ENCODE measurements at regions of chr12 and their contacts with region 1.

Region 1: DNA sequence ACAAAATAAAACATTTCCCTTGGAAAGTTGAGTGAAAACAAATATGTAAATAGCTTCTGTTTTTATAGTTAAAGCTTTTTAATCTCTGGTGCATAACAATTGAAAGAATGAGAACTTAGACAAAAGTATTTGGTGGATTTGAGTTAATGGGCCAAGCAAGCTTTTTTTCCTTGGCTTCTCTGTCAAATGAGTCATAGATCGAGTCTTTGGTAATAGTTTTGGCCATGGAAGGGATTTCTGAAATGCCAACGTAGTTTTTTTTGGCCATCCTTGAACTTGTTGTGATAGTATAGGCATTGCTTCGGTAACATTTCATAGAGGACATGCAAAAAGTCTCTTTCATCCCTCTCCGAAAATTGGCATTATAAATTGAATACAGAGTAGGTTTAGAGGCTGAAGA is 34.9 kb downstream of the GPR19 start:
- DNase-seq: no peak
- H3K4me3 ChIP-seq: no peak overlapping the region
- H3K4me3 Mint-ChIP-seq: no peak overlapping the region
- H3K27ac ChIP-seq: no peak overlapping the region
- H3K27ac Mint-ChIP-seq: no peak overlapping the region
- H3K4me1 ChIP-seq: no peaks in the 10 kb centered on the region
- H3K4me1 Mint-ChIP-seq: peaks cover 2% of the 10 kb centered on the region
- H3K27me3 ChIP-seq: no peaks in the 10 kb centered on the region
- H3K27me3 Mint-ChIP-seq: peaks cover 0 to 3% (median 0%) of the 10 kb centered on the region in 3 donors
- CTCF ChIP-seq: no peak

Region 2: GRCh38 chr12:12376646-12377448 is 284.2 kb before region 1 on chr12:
- intact Hi-C with region 1: loop called in 1 of 2 experiments (anchors 2 kb)
- DNase-seq: peak; percentile 56 to 88 (median 69)
- H3K4me3 ChIP-seq: no peak overlapping the region
- H3K4me3 Mint-ChIP-seq: no peak overlapping the region
- H3K27ac ChIP-seq: no peak overlapping the region
- H3K27ac Mint-ChIP-seq: peak overlapping the region in 3 of 7 donors; percentile 78 to 82 (median 80)
- H3K4me1 ChIP-seq: peaks cover 16 to 22% of the 10 kb centered on the region in 2 donors
- H3K4me1 Mint-ChIP-seq: peaks cover 23% of the 10 kb centered on the region
- H3K27me3 ChIP-seq: no peaks in the 10 kb centered on the region
- H3K27me3 Mint-ChIP-seq: peaks cover 0 to 2% (median 0%) of the 10 kb centered on the region in 3 donors
- CTCF ChIP-seq: peak; percentile 74

Region 3: DNA sequence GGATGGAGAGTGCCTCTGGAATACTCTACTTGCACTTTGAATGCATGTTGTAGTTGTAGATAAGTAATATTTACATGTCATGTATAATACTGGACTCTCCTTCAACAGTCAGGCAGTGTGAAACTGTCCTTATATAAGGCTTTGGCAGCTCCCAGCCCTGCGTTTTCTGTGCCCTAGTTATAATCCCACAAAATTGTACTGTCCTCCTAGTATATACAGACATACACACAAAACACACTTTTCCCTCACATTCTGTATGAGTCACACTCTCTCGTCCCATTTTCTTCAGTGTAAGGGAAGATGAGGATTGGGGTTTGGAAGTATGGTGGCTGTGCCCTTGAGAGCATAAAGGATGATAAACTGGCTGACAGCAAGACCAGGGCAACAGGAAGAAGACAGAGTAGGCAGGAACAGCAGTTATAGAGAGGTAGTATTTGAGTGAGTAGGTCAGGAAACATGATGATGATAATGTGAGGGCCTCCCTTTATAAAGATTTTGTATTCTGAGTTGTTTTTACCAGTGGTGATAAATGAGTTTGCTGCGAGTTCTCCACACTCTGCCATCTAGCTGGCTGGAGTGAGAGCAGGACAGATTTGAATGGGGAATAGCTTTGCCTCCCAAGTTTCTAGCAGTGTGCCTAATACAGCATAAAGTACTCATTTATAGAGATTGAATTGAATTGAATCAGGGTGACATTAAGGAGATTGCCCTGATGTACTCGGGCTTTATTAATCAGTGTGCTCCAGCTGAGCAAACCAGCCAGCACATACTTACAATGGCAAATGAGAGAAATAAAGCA is 44.4 kb before region 1 on chr12:
- intact Hi-C with region 1: no loop called
- DNase-seq: no peak
- H3K4me3 ChIP-seq: no peak overlapping the region
- H3K4me3 Mint-ChIP-seq: no peak overlapping the region
- H3K27ac ChIP-seq: no peak overlapping the region
- H3K27ac Mint-ChIP-seq: peak overlapping the region in 2 of 7 donors; percentile 31 to 65
- H3K4me1 ChIP-seq: peaks cover 24 to 25% of the 10 kb centered on the region in 2 donors
- H3K4me1 Mint-ChIP-seq: peaks cover 31% of the 10 kb centered on the region
- H3K27me3 ChIP-seq: no peaks in the 10 kb centered on the region
- H3K27me3 Mint-ChIP-seq: no peaks in the 10 kb centered on the region
- CTCF ChIP-seq: no peak

Region 4: GRCh38 chr12:12696562-12697383 is 35.7 kb after region 1 on chr12:
- intact Hi-C with region 1: no loop called
- DNase-seq: peak; percentile 90 to 98 (median 92)
- H3K4me3 ChIP-seq: peak overlapping the region; percentile 58 to 83 (median 75)
- H3K4me3 Mint-ChIP-seq: peak overlapping the region; percentile 83 to 95
- H3K27ac ChIP-seq: peak overlapping the region; percentile 97
- H3K27ac Mint-ChIP-seq: peak overlapping the region; percentile 96 to 98 (median 98)
- H3K4me1 ChIP-seq: peaks cover 26 to 28% of the 10 kb centered on the region in 2 donors
- H3K4me1 Mint-ChIP-seq: peaks cover 29% of the 10 kb centered on the region
- H3K27me3 ChIP-seq: no peaks in the 10 kb centered on the region
- H3K27me3 Mint-ChIP-seq: peaks cover 0 to 3% (median 0%) of the 10 kb centered on the region in 3 donors
- CTCF ChIP-seq: no peak

Measured in CD14-positive monocyte (primary cell).